ENCODE measurements at regions of chr3 and their contacts with region 1.

Region 1: DNA sequence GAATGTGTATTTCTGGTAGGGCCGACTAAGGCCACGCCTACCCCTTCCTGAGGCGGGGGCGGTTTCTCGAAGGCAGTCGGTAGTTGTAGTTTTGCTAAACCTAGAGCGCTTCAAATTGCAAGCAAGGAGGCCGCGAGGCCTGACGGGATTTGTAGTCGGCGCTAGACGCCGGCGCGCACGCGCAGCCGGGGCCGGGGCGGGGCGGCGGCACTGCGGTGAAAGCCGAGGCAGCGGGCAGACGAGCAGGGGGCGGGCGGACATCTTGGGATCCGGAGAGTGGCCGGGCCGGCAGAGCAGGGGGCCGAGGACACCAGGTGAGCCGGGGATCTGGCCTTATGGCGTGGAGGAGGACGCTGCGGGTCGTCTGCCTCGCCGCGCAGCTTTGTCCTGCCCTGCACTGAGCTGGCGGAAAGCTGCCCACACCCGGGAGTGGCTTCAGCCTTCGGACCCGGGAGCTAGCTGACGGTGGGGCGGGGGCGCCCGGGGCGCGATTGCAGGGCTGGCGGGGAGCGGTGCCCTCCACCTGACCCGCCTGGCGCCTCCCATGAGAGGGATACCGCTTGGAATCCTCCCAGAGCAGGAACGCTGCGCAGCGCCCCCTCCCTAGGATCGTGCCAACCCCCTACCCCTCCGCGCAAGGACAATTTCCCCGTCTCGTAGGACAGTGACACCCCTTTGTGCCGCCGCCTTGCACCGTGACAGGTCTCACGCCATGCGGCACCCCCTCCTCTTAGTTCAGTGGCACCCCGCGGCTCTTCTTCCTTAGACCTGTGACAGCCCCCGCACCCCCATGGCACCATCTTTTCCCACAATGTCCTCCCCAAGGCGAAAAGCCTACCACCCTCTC is at the start of gene AP2M1:
- DNase-seq: peak; percentile 96 to 99 (median 97)
- ATAC-seq: peak; percentile 98
- H3K4me3 ChIP-seq: peak within 1 kb of the TSS; percentile 83 to 93
- H3K4me3 Mint-ChIP-seq: peak within 1 kb of the TSS; percentile 96
- H3K27ac ChIP-seq: peak within 1 kb of the TSS; percentile 71 to 73
- H3K27ac Mint-ChIP-seq: peak within 1 kb of the TSS; percentile 90
- H3K4me1 ChIP-seq: peaks cover 26% of the 10 kb centered on the region
- H3K4me1 Mint-ChIP-seq: peaks cover 32% of the 10 kb centered on the region
- H3K27me3 ChIP-seq: no peaks in the 10 kb centered on the region
- H3K27me3 Mint-ChIP-seq: no peaks in the 10 kb centered on the region
- CTCF ChIP-seq: no peak
- total RNA-seq, gene AP2M1: 121 to 123 TPM

Region 2: GRCh38 chr3:184017672-184018423 is 157.0 kb before region 1 on chr3 and contains the start of gene ABCC5:
- CTCF ChIA-PET with region 1: no interaction called
- POLR2A ChIA-PET with region 1: no interaction called
- intact Hi-C with region 1: loop called (anchors 1 to 5 kb)
- DNase-seq: peak; percentile 60 to 91 (median 80)
- ATAC-seq: peak; percentile 94
- H3K4me3 ChIP-seq: peak within 1 kb of the TSS; percentile 94 to 98
- H3K4me3 Mint-ChIP-seq: peak within 1 kb of the TSS; percentile 99
- H3K27ac ChIP-seq: peak within 1 kb of the TSS; percentile 51 to 56
- H3K27ac Mint-ChIP-seq: peak within 1 kb of the TSS; percentile 83
- H3K4me1 ChIP-seq: peaks cover 11% of the 10 kb centered on the region
- H3K4me1 Mint-ChIP-seq: peaks cover 32% of the 10 kb centered on the region
- H3K27me3 ChIP-seq: no peaks in the 10 kb centered on the region
- H3K27me3 Mint-ChIP-seq: peaks cover 12% of the 10 kb centered on the region
- CTCF ChIP-seq: peak; percentile 76
- total RNA-seq, gene ABCC5: 7.4 to 8.3 TPM

Region 3: DNA sequence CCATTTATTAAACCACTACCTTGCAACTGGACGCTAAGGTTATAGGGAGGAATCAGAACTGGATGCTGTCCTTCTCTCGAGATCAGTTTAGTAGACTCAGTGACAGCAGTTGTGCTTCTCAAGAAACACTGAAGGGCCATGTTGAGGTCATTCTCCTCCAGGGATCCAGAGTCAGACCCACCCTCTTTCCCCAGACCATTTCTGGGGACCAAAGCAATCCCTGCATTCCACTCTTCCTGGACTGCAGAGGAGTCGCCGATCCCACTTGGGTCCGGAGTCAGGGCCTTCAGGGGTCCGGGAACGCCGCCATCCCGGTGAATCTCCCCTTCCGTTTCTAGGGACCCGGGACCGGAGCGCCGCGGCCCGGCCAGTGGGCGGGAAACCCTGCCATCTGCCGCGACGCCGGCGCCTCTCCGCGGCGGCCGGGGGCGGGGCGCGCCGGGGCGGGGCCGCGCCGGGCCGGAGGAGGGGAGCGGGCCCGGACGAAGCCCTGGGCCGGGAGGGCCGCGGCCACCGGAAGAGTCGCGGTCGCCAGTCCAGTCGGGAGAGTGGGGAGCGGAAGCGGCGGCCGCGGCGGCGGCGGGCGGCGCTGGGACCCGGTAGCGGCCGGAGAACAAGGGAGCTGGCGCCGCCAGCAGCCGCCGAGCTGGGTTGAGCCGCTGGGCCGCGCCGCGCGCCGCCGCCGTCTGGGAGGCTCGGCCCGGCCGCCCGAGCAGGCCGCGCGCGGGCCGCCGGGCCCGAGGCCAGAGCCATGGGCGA is 19.8 kb before region 1 on chr3 and contains the start of gene DVL3:
- CTCF ChIA-PET with region 1: no interaction called
- POLR2A ChIA-PET with region 1: interaction called, 4 read pairs
- intact Hi-C with region 1: loop called (anchors 1 kb)
- DNase-seq: peak in 8 of 9 experiments; percentile 20 to 69 (median 40)
- ATAC-seq: peak; percentile 58
- H3K4me3 ChIP-seq: peak within 1 kb of the TSS; percentile 62 to 85
- H3K4me3 Mint-ChIP-seq: peak within 1 kb of the TSS; percentile 92
- H3K27ac ChIP-seq: peak within 1 kb of the TSS; percentile 48 to 72
- H3K27ac Mint-ChIP-seq: peak within 1 kb of the TSS; percentile 83
- H3K4me1 ChIP-seq: peaks cover 21% of the 10 kb centered on the region
- H3K4me1 Mint-ChIP-seq: peaks cover 27% of the 10 kb centered on the region
- H3K27me3 ChIP-seq: no peaks in the 10 kb centered on the region
- H3K27me3 Mint-ChIP-seq: no peaks in the 10 kb centered on the region
- CTCF ChIP-seq: no peak
- total RNA-seq, gene DVL3: 23.1 to 23.9 TPM

Region 4: DNA sequence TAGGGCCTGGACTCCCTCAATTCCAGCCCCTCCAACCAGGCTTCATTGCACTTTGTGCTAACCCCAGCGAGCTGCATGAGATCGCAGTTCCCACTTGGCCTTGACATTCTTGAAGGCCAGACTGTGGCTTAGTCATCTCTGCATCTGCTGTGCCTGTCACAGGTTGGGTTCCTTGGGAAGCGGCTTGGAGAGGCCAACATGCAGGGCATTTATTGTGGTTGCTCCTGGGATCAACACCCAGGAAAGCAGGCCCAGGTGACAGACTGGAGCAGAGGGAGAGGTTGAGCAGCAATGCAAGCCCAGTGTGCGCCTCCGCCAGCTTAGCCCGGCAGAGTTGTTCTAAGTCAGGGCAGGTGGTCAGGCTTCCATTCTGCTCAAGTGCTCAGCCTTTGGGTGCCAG is 21.7 kb after region 1 on chr3:
- CTCF ChIA-PET with region 1: no interaction called
- POLR2A ChIA-PET with region 1: no interaction called
- intact Hi-C with region 1: no loop called
- DNase-seq: no peak
- ATAC-seq: no peak
- H3K4me3 ChIP-seq: no peak overlapping the region
- H3K4me3 Mint-ChIP-seq: no peak overlapping the region
- H3K27ac ChIP-seq: no peak overlapping the region
- H3K27ac Mint-ChIP-seq: no peak overlapping the region
- H3K4me1 ChIP-seq: no peaks in the 10 kb centered on the region
- H3K4me1 Mint-ChIP-seq: no peaks in the 10 kb centered on the region
- H3K27me3 ChIP-seq: no peaks in the 10 kb centered on the region
- H3K27me3 Mint-ChIP-seq: no peaks in the 10 kb centered on the region
- CTCF ChIP-seq: no peak

Region 5: GRCh38 chr3:184229394-184230080 is 54.7 kb after region 1 on chr3 and contains the start of gene VWA5B2:
- CTCF ChIA-PET with region 1: no interaction called
- POLR2A ChIA-PET with region 1: no interaction called
- intact Hi-C with region 1: loop called in 1 of 2 experiments (anchors 1 kb)
- DNase-seq: peak; percentile 54 to 89 (median 75)
- ATAC-seq: peak; percentile 97
- H3K4me3 ChIP-seq: peak within 1 kb of the TSS; percentile 52 to 80
- H3K4me3 Mint-ChIP-seq: peak within 1 kb of the TSS; percentile 76
- H3K27ac ChIP-seq: no peak within 1 kb of the TSS
- H3K27ac Mint-ChIP-seq: no peak within 1 kb of the TSS
- H3K4me1 ChIP-seq: peaks cover 14% of the 10 kb centered on the region
- H3K4me1 Mint-ChIP-seq: peaks cover 14% of the 10 kb centered on the region
- H3K27me3 ChIP-seq: peaks cover 21 to 31% of the 10 kb centered on the region in 2 experiments
- H3K27me3 Mint-ChIP-seq: peaks cover 49% of the 10 kb centered on the region
- CTCF ChIP-seq: peak; percentile 35
- total RNA-seq, gene VWA5B2: 0.28 to 0.65 TPM

Region 6: DNA sequence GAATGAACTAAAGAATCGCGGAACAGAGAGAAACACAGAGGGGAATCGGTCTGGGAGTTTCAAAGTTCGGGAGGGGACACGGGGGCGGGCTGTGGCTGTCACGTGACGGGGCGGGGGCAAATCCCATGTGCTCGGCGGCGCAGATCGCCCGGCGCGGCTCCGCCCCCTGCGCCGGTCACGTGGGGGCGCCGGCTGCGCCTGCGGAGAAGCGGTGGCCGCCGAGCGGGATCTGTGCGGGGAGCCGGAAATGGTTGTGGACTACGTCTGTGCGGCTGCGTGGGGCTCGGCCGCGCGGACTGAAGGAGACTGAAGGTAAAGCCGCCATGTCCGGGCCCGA is 139.5 kb after region 1 on chr3 and contains the start of gene EIF4G1:
- CTCF ChIA-PET with region 1: no interaction called
- POLR2A ChIA-PET with region 1: no interaction called
- intact Hi-C with region 1: loop called in 1 of 2 experiments (anchors 1 kb)
- DNase-seq: peak; percentile 83 to 98 (median 92)
- ATAC-seq: peak; percentile 78
- H3K4me3 ChIP-seq: peak within 1 kb of the TSS; percentile 60 to 64
- H3K4me3 Mint-ChIP-seq: peak within 1 kb of the TSS; percentile 87
- H3K27ac ChIP-seq: peak within 1 kb of the TSS; percentile 80 to 93
- H3K27ac Mint-ChIP-seq: peak within 1 kb of the TSS; percentile 94
- H3K4me1 ChIP-seq: peaks cover 23% of the 10 kb centered on the region
- H3K4me1 Mint-ChIP-seq: peaks cover 33% of the 10 kb centered on the region
- H3K27me3 ChIP-seq: no peaks in the 10 kb centered on the region
- H3K27me3 Mint-ChIP-seq: no peaks in the 10 kb centered on the region
- CTCF ChIP-seq: no peak
- total RNA-seq, gene EIF4G1: 220 to 235 TPM

Measured in CD8-positive, alpha-beta T cell (primary cell).